CD8-positive, alpha-beta T cell (primary cell): ENCODE measurements at regions of chr13 and their contacts with region 1.

Region 1: DNA sequence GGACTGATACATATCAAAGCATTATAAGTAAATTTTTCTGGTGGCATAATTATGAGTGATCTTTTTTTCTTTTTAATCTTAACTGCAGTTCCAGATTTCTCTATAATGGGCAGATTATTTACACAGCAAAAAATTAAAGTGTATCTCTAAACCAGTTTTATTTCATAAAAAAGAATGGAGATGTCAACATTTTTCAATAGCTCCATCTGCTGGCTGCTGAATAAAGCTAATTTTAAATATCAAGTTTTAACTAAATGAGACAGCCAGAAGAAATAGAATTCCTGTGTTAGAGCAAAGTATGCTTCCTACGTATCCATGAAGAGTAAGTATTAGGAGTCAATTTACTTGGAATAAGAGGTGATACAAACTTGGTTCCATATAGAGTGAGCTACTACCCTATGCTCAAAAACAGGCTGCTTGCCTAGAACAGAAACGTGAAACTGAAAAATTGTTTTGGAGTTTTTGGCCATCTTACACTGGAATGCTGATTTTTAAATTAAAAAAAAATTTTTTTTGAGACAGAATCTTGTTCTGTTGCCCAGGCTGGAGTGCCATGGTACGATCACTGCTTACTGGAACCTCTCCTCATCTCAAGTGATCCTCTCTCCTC is 5.0 kb upstream of the PDS5B start:
- DNase-seq: peak in 2 of 9 experiments; percentile 29 to 50
- ATAC-seq: no peak
- H3K4me3 ChIP-seq: no peak overlapping the region
- H3K4me3 Mint-ChIP-seq: no peak overlapping the region
- H3K27ac ChIP-seq: no peak overlapping the region
- H3K27ac Mint-ChIP-seq: no peak overlapping the region
- H3K4me1 ChIP-seq: peaks cover 4% of the 10 kb centered on the region
- H3K4me1 Mint-ChIP-seq: peaks cover 7% of the 10 kb centered on the region
- H3K27me3 ChIP-seq: no peaks in the 10 kb centered on the region
- H3K27me3 Mint-ChIP-seq: no peaks in the 10 kb centered on the region
- CTCF ChIP-seq: peak; percentile 72

Region 2: GRCh38 chr13:32267836-32268439 is 313.3 kb before region 1 on chr13:
- CTCF ChIA-PET with region 1: no interaction called
- POLR2A ChIA-PET with region 1: no interaction called
- intact Hi-C with region 1: loop called in 1 of 2 experiments (anchors 5 kb)
- DNase-seq: peak; percentile 21 to 66 (median 52)
- ATAC-seq: peak; percentile 97
- H3K4me3 ChIP-seq: no peak overlapping the region
- H3K4me3 Mint-ChIP-seq: no peak overlapping the region
- H3K27ac ChIP-seq: no peak overlapping the region
- H3K27ac Mint-ChIP-seq: no peak overlapping the region
- H3K4me1 ChIP-seq: no peaks in the 10 kb centered on the region
- H3K4me1 Mint-ChIP-seq: no peaks in the 10 kb centered on the region
- H3K27me3 ChIP-seq: no peaks in the 10 kb centered on the region
- H3K27me3 Mint-ChIP-seq: no peaks in the 10 kb centered on the region
- CTCF ChIP-seq: peak; percentile 82

Region 3: DNA sequence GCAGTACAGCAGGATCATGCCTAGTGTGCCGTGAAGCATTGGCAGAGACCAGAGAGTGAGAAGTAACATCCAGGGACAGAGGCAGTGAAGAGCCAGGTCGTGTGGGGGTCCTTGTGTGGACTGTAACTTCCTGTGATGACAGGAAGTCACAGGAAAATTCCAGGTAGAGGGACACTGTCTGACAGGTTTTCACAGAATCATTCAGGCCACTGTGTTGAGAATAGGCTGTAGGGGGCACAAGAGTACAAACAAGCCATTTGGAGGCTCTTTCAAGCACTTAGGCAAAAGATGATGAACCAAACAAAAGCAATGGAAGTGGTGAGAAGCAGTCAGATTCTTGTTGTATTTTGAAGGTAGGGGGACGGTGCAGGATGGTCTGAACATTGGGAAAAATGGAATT is 199.7 kb before region 1 on chr13:
- CTCF ChIA-PET with region 1: interaction called, 22 read pairs
- POLR2A ChIA-PET with region 1: no interaction called
- intact Hi-C with region 1: loop called (anchors 1 kb)
- DNase-seq: peak in 5 of 9 experiments; percentile 17 to 70 (median 30)
- ATAC-seq: peak; percentile 80
- H3K4me3 ChIP-seq: no peak overlapping the region
- H3K4me3 Mint-ChIP-seq: no peak overlapping the region
- H3K27ac ChIP-seq: no peak overlapping the region
- H3K27ac Mint-ChIP-seq: no peak overlapping the region
- H3K4me1 ChIP-seq: no peaks in the 10 kb centered on the region
- H3K4me1 Mint-ChIP-seq: no peaks in the 10 kb centered on the region
- H3K27me3 ChIP-seq: no peaks in the 10 kb centered on the region
- H3K27me3 Mint-ChIP-seq: no peaks in the 10 kb centered on the region
- CTCF ChIP-seq: peak; percentile 51

Region 4: DNA sequence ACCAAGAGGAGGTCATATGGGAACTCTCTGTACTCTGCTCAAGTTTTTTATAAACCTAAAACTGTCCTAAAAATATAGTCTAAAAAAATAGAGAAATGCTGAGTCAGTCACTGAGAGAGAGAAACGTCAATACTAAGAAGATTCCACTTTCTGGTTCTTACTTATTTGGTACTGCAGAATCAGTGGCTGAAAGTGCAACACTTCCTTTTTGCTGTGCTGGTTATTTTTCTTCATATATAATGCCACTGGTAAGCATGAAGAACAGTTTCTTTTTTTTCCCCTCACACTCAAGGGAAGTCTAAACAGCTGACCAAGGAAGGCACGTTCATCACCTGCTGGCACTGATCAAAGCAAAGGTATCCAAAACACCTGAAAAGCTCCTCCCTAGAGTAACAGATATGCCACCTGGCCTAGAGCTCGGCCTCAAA is 109.1 kb before region 1 on chr13:
- CTCF ChIA-PET with region 1: interaction called, 5 read pairs
- POLR2A ChIA-PET with region 1: no interaction called
- intact Hi-C with region 1: loop called in 1 of 2 experiments (anchors 2 kb)
- DNase-seq: no peak
- ATAC-seq: no peak
- H3K4me3 ChIP-seq: no peak overlapping the region
- H3K4me3 Mint-ChIP-seq: no peak overlapping the region
- H3K27ac ChIP-seq: no peak overlapping the region
- H3K27ac Mint-ChIP-seq: no peak overlapping the region
- H3K4me1 ChIP-seq: no peaks in the 10 kb centered on the region
- H3K4me1 Mint-ChIP-seq: no peaks in the 10 kb centered on the region
- H3K27me3 ChIP-seq: no peaks in the 10 kb centered on the region
- H3K27me3 Mint-ChIP-seq: no peaks in the 10 kb centered on the region
- CTCF ChIP-seq: no peak